Panc1 (cell line): ENCODE measurements at regions of chr21 and their contacts with region 1.

Region 1: GRCh38 chr21:37711836-37712568 is 204.3 kb downstream of the KCNJ6 start:
- DNase-seq: peak; percentile 57
- ATAC-seq: peak; percentile 97
- H3K4me3 ChIP-seq: no peak overlapping the region
- H3K27ac ChIP-seq: no peak overlapping the region
- H3K4me1 ChIP-seq: no peaks in the 10 kb centered on the region
- H3K27me3 ChIP-seq: no peaks in the 10 kb centered on the region
- CTCF ChIP-seq: peak; percentile 83

Region 2: DNA sequence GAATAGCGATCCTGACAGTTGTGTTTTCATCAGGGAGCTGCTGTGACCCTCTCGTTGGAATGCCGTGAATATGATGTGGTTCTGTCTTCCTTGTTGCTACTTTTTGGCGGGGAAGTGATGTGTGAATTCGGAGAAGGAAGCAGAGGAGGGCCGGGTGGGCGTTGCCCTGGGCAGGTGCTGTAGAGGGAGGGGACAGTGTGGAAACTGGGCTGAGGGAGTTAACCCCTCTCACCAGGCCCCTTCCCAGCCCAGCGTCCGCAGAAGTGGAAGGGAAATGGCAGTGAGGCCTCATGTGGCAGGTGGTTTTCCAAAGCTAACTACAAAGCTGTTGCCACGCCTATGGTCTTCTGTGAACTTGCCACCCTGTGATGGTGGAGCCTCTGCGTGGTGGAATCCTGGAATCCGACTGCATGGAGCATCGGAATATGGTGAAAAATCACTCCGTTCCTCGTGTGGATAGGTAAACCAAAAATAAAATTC is 117.5 kb before region 1 on chr21:
- CTCF ChIA-PET with region 1: no interaction called
- POLR2A ChIA-PET with region 1: no interaction called
- in situ Hi-C with region 1: no loop called
- intact Hi-C with region 1: no loop called
- DNase-seq: no peak
- ATAC-seq: no peak
- H3K4me3 ChIP-seq: no peak overlapping the region
- H3K27ac ChIP-seq: no peak overlapping the region
- H3K4me1 ChIP-seq: no peaks in the 10 kb centered on the region
- H3K27me3 ChIP-seq: no peaks in the 10 kb centered on the region
- CTCF ChIP-seq: no peak

Region 3: DNA sequence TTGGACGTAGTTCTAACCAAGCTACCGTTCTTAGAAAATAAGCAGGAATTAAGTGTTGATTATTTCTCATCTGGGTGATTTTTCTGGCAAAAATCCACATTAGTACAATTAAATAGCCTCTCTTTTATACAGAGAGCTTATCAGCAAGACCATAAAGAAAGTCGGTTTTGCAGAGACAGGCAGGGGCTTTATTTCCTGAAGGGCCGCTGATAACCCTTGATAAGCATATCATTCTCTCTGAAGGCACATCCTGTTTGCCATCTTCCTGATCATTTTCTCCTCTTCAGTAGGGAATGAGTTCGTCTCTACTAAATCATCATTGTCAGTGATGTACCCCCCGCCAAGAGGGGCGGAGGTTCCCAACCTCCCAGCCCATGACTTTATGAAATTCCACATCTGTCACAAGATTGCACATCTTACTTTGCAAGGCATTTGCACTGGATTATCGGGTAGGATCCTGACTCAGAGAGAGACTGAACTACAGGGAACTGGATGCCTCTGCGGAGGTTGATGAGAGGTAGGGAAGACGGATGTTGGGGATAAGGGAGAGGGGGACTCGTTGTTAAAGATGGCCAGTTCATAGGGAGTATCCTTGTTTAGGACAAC is 88.6 kb after region 1 on chr21:
- CTCF ChIA-PET with region 1: no interaction called
- POLR2A ChIA-PET with region 1: no interaction called
- in situ Hi-C with region 1: no loop called
- intact Hi-C with region 1: no loop called
- DNase-seq: no peak
- ATAC-seq: no peak
- H3K4me3 ChIP-seq: no peak overlapping the region
- H3K27ac ChIP-seq: no peak overlapping the region
- H3K4me1 ChIP-seq: no peaks in the 10 kb centered on the region
- H3K27me3 ChIP-seq: peaks cover 2% of the 10 kb centered on the region
- CTCF ChIP-seq: no peak

Region 4: GRCh38 chr21:37886120-37886519 is 174.1 kb after region 1 on chr21:
- CTCF ChIA-PET with region 1: no interaction called
- POLR2A ChIA-PET with region 1: interaction called, 10 read pairs
- in situ Hi-C with region 1: no loop called
- intact Hi-C with region 1: no loop called
- DNase-seq: no peak
- ATAC-seq: no peak
- H3K4me3 ChIP-seq: no peak overlapping the region
- H3K27ac ChIP-seq: no peak overlapping the region
- H3K4me1 ChIP-seq: no peaks in the 10 kb centered on the region
- H3K27me3 ChIP-seq: no peaks in the 10 kb centered on the region; the same call in 1 of the 2 replicates
- CTCF ChIP-seq: no peak

Region 5: GRCh38 chr21:37916310-37917051 is 204.5 kb after region 1 on chr21 and contains the start of gene KCNJ6:
- CTCF ChIA-PET with region 1: no interaction called
- POLR2A ChIA-PET with region 1: no interaction called
- in situ Hi-C with region 1: no loop called
- intact Hi-C with region 1: loop called (anchors 5 kb)
- DNase-seq: no peak
- ATAC-seq: peak; percentile 87
- H3K4me3 ChIP-seq: 0 out of 4 replicates have a peak within 1 kb of the TSS, but pooled peaks of 1 of the 2 experiments have one; percentile 11
- H3K27ac ChIP-seq: no peak within 1 kb of the TSS
- H3K4me1 ChIP-seq: no peaks in the 10 kb centered on the region
- H3K27me3 ChIP-seq: peaks cover 6% of the 10 kb centered on the region
- CTCF ChIP-seq: peak; percentile 76
- total RNA-seq, gene KCNJ6: not detected